ENCODE measurements at regions of chr1 and their contacts with region 1.

Region 1: DNA sequence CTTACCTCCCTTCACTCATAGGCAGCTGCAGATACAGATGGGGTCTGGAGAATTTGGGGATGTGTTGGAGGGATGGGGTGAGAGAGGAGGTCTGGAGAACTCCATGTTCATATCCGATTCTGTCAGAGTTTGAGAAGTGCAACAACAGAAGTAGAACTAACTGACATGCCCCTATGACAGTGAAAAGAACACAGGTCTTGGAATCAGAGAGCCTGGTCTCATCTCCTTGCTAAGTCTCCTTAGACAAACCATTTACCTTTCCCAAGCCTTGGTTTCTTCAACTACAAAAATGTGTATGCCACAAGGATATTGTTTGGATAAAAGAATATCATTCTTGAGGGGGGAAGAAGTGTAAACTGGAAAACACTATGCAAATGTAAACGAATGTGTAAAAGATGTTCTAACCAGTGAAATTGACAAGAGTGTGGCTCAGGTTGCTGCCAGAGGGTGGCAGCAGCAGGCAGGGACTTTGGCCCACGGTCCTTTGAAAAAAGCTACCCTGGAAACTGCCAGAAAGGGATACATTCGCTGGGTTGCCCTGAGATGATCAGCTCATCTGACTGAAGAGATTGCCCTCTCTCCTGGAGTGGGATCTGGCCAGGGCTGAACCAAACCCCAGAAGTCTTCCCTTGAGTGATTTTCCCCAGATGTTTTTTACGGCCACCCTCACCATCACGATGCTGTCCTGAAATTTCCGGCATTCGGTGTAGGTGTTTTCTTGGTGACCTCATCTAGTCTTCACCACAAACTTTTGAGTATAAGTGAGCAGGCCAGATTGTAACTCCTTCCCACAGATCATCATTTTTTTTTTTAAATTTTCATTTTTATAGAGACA is 17.0 kb upstream of the CD2 start:
- DNase-seq: peak in 8 of 10 donors; percentile 7 to 75 (median 54)
- H3K4me3 ChIP-seq: no peak overlapping the region
- H3K27ac ChIP-seq: no peak overlapping the region
- H3K27me3 ChIP-seq: no peaks in the 10 kb centered on the region
- CTCF ChIP-seq: peak; percentile 38 to 85 (median 75)

Region 2: GRCh38 chr1:116390195-116390594 is 347.0 kb before region 1 on chr1:
- intact Hi-C with region 1: no loop called
- DNase-seq: no peak
- H3K4me3 ChIP-seq: no peak overlapping the region
- H3K27ac ChIP-seq: peak overlapping the region in 5 of 59 donors; percentile 7 to 38 (median 20)
- H3K27me3 ChIP-seq: no peaks in the 10 kb centered on the region
- CTCF ChIP-seq: no peak

Region 3: DNA sequence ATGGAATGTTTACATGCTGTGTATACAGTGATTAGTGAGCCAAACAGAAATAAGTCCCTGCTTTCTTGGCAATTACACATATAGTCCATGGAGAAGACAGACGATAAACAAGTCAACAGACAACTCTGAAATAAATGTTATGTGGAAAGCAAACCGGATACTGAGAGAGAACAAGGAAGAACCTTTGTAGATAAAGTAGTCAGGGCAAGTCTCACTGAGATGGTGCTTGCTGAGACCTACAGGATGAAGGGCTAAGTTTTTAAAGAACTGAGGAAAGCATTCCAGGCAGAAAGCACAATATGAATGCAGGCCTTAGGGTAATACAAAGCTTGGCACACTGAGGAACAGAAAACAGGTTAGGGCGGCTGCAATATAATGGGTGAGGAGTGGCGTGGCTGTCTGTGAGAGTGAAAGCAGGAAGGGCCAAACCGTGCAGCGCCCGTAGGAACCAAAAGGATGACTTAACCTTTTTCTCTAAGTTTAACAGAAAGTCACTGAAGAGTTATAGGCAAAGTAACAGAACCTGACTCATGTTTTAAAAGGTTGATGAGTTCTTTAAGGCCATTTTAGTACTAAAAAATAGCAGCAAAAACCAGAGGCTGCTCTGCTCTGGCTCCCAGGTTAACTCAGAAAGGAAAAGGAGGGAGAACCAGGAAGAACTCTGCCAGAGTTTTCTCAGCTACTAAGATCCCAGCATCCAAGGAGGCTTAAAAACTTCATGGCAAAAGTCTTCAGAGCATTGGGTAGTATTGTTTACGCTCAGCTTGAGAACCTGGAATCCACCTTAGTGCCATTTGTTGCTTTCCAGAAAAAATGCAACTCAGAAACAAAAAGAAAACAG is 314.2 kb after region 1 on chr1:
- intact Hi-C with region 1: loop called (anchors 2 to 5 kb)
- DNase-seq: no peak
- H3K4me3 ChIP-seq: peak overlapping the region in 1 of 59 donors; percentile 9
- H3K27ac ChIP-seq: no peak overlapping the region
- H3K27me3 ChIP-seq: no peaks in the 10 kb centered on the region
- CTCF ChIP-seq: no peak

Region 4: GRCh38 chr1:117290890-117291289 is 553.7 kb after region 1 on chr1:
- intact Hi-C with region 1: loop called in 1 of 2 experiments (anchors 10 kb)
- DNase-seq: no peak
- H3K4me3 ChIP-seq: no peak overlapping the region
- H3K27ac ChIP-seq: no peak overlapping the region
- H3K27me3 ChIP-seq: no peaks in the 10 kb centered on the region
- CTCF ChIP-seq: no peak

Measured in dorsolateral prefrontal cortex (tissue), 120 donors.